Transverse colon (tissue), 4 donors: ENCODE measurements at regions of chr6 and their contacts with region 1.

Region 1: DNA sequence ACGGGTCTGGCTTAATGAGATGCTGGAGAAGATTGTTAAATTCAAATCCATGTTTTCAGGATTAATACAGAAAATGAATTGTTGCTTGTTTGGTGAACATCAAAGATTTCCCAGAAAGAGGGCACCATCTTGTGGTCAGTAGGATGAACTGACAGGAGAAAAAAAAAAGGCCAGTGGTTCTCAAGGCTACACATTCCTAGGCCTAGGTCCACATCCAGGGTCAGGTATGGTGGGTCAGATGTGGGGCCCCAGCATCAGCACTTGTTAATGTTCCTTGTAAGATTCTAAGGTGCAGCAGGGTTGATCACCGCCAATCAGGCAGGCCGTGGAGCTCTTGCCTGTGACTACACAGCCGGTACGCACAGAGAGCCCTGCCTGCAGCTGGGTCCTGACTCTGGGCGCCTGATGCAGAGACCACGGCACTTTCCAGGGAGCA is 34.0 kb upstream of the FOXO3 start:
- DNase-seq: no peak
- H3K4me3 ChIP-seq: no peak overlapping the region
- H3K27ac ChIP-seq: no peak overlapping the region
- H3K4me1 ChIP-seq: no peaks in the 10 kb centered on the region
- H3K27me3 ChIP-seq: no peaks in the 10 kb centered on the region
- CTCF ChIP-seq: peak; percentile 75 to 86 (median 84)
- EP300 ChIP-seq: no peak
- POLR2A ChIP-seq: no peak

Region 2: GRCh38 chr6:108105571-108105970 is 421.2 kb before region 1 on chr6:
- in situ Hi-C with region 1: loop called in 3 of 4 experiments (anchors 10 kb)
- intact Hi-C with region 1: no loop called
- DNase-seq: no peak
- H3K4me3 ChIP-seq: no peak overlapping the region
- H3K27ac ChIP-seq: no peak overlapping the region
- H3K4me1 ChIP-seq: no peaks in the 10 kb centered on the region
- H3K27me3 ChIP-seq: peaks cover 21% of the 10 kb centered on the region
- CTCF ChIP-seq: no peak
- EP300 ChIP-seq: no peak
- POLR2A ChIP-seq: no peak

Region 3: DNA sequence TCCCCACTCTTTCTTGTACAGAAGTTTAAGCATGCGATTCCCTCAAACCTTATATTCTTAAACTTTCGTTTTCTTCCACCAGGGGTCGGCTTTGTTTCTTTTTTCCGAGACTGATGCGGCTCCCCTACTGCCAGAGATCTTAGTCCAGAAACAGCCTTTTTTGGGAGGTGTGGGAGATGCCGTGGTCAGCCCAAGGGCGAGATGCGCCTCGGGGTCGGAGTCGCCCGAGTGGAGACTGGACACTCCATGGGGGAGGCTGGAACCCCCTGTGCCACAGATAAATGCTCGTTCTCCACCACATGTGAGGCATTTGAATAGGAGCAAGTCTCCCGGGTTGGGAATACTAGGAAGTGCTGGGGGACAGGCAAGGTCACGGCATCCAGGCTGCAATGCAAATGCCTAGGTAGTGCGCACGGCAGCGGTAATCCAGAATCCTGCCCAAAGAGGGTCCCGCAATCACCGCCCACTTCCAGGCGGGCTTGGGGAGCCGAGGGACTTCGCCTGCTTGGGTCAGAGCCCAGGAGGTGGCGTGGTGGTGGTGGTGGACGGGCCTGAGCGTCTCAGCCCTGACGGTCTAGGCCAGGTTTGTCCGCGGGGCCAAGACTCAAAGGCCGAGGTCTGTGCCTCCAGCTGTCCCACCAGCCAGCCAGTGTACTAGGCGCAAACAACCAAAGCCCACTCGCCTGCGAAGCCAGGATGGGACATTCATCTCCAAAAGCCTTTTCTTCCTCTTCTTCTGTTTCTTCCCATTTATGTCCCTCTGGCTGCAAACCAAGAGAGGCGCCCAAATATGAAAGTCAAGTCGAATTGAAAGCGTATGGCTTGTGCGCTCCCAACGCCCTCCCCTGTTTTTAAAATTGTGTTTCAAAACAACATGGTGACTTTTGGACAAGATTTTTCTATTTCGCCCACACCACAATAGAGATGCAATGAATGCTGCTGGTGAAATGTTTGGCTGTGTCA is 412.9 kb before region 1 on chr6:
- in situ Hi-C with region 1: loop called in 3 of 4 experiments (anchors 10 kb)
- intact Hi-C with region 1: loop called (anchors 2 kb)
- DNase-seq: no peak
- H3K4me3 ChIP-seq: peak overlapping the region in 1 of 4 donors; percentile 19
- H3K27ac ChIP-seq: no peak overlapping the region
- H3K4me1 ChIP-seq: peaks cover 22 to 49% (median 40%) of the 10 kb centered on the region in 4 donors
- H3K27me3 ChIP-seq: peaks cover 99% of the 10 kb centered on the region
- CTCF ChIP-seq: peak; percentile 46 to 61 (median 48)
- EP300 ChIP-seq: no peak
- POLR2A ChIP-seq: no peak

Region 4: GRCh38 chr6:108247954-108248536 is 278.7 kb before region 1 on chr6:
- in situ Hi-C with region 1: no loop called
- intact Hi-C with region 1: no loop called
- DNase-seq: no peak
- H3K4me3 ChIP-seq: no peak overlapping the region
- H3K27ac ChIP-seq: no peak overlapping the region
- H3K4me1 ChIP-seq: peaks cover 0 to 18% (median 12%) of the 10 kb centered on the region in 4 donors
- H3K27me3 ChIP-seq: no peaks in the 10 kb centered on the region
- CTCF ChIP-seq: no peak
- EP300 ChIP-seq: no peak
- POLR2A ChIP-seq: no peak

Region 5: DNA sequence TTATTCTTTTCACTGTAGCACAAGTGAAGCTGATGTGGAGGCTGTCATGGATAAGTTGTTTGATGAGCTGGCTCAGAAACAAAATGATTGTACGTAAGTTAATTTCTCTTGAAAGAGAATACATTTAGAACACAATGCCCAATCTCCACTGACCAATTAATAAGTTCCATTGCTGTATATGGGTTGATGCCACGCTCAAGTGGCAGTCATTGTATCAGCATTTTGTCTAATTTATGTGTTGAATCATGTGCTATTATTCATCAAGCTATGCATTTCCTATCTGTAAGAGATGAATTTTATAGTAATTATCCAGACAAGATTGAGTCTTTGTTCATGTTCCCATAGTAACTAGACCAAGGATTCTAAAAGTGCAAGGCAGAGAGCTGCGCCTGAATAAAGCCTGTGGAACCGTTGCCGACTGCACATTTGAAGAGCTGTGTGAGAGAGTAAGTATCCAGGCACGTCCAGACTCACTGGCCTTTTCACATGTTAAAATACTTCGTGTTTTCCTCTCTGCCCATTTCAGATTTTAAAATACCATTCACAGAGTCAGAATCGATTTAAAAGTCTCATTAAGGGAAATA is 49.8 kb before region 1 on chr6:
- in situ Hi-C with region 1: no loop called
- intact Hi-C with region 1: no loop called
- DNase-seq: no peak
- H3K4me3 ChIP-seq: no peak overlapping the region
- H3K27ac ChIP-seq: no peak overlapping the region
- H3K4me1 ChIP-seq: no peaks in the 10 kb centered on the region
- H3K27me3 ChIP-seq: no peaks in the 10 kb centered on the region
- CTCF ChIP-seq: no peak
- EP300 ChIP-seq: no peak
- POLR2A ChIP-seq: no peak

Region 6: DNA sequence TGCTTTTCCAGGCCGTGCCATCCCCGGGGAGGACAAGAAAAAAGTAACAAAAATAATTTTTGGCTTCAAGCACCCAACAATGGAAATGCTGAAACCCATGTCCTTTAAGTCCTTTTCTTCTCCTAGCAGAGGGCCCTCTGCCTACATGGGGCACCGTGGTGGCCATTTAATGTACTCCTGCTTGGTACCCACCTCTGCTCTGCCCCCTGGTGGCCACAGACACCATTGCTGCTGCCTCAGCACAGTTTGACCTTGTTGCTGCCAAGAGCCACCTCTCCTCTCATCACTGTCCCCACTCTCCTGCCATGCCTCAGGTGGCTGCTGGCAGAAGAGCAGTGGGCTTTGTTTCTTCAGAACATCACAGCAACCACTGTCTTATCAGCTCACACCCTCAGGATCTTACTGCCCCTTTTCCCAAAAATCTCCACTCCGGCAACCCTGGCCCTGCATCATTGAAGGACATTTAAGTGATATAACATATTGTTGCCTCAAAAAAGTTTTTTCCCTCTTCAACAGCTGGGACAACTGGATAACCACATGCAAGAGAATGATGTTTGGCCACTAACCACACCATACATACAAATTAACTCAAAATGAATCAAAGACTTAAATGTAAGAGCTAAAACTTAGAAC is 308.6 kb after region 1 on chr6:
- in situ Hi-C with region 1: loop called in 2 of 4 experiments (anchors 10 to 25 kb)
- intact Hi-C with region 1: no loop called
- DNase-seq: peak; percentile 92
- H3K4me3 ChIP-seq: no peak overlapping the region
- H3K27ac ChIP-seq: no peak overlapping the region
- H3K4me1 ChIP-seq: peaks cover 0 to 8% (median 0%) of the 10 kb centered on the region in 4 donors
- H3K27me3 ChIP-seq: no peaks in the 10 kb centered on the region
- CTCF ChIP-seq: peak; percentile 91 to 97 (median 96)
- EP300 ChIP-seq: no peak
- POLR2A ChIP-seq: no peak

Region 7: DNA sequence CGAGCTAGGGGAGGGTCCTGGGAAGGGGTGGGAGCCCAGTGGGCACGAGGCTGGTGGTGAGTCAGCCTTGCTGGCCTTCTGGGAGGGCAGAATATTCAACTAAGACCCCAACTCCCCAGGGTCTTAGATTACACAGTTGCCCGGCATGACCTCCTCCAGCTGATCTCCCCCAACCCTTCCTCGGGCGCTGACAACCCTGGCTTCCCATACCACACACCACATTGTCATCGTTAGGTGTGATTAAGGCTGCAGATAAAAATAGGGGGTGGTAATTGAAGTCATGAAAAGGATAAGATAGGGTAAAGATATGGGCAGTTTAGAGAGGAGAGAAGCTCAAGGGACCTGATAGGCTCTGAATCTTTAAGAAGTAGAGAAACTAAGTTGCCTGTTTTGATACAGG is 1664.0 kb after region 1 on chr6:
- in situ Hi-C with region 1: no loop called
- intact Hi-C with region 1: loop called (anchors 5 kb)
- DNase-seq: no peak
- H3K4me3 ChIP-seq: no peak overlapping the region
- H3K27ac ChIP-seq: no peak overlapping the region
- H3K4me1 ChIP-seq: peaks cover 0 to 6% (median 0%) of the 10 kb centered on the region in 4 donors
- H3K27me3 ChIP-seq: no peaks in the 10 kb centered on the region
- CTCF ChIP-seq: no peak
- EP300 ChIP-seq: no peak
- POLR2A ChIP-seq: no peak